ENCODE measurements at regions of chr3 and their contacts with region 1.

Region 1: DNA sequence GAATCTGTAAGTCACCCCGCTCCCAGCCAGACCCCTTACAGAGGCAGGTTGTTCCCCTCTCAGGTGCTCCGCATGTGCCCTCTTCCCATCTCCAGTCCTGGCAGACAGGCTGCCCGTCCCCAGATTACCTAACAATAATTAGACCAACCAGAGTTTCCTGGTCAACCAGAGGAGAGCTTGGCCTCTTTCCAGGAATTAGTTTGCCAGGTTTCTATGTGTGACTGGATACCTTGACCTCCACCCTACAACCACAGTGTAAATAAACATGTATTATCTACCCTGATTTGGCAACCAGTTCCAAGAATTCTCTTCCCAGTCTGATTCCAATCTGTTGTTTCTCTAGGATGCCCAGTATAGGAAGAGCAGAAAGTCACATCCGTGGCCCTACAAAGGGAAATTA is 178.0 kb upstream of the UMPS start:
- DNase-seq: peak in 2 of 7 donors; percentile 47 to 70
- H3K4me3 ChIP-seq: no peak overlapping the region
- H3K27ac ChIP-seq: no peak overlapping the region
- H3K4me1 ChIP-seq: peaks cover 5 to 11% of the 10 kb centered on the region in 2 donors
- H3K27me3 ChIP-seq: no peaks in the 10 kb centered on the region
- CTCF ChIP-seq: no peak
- POLR2A ChIP-seq: no peak

Region 2: DNA sequence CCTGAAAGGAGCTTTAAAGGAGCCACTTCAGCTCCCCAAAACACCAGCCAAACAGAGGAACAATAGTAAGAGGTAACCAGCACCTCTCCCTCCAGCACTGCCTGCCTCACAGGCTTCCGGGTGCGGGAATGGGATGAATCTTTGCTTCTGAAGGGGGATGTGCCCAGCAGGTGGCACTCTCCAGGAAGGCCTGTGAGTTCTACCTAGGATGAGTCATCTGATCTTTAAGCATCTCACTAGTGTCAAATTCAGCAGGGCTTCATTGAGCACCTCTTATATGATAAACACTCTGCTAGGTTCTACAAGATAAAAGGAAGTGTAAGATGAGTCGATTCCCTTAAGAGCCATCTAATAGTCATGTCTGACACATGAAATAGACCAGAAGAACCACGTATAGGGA is 59.4 kb before region 1 on chr3:
- intact Hi-C with region 1: loop called (anchors 2 to 10 kb)
- DNase-seq: peak; percentile 55 to 81 (median 68)
- H3K4me3 ChIP-seq: no peak overlapping the region
- H3K27ac ChIP-seq: no peak overlapping the region
- H3K4me1 ChIP-seq: peaks cover 0 to 8% of the 10 kb centered on the region in 2 donors
- H3K27me3 ChIP-seq: no peaks in the 10 kb centered on the region
- CTCF ChIP-seq: peak; percentile 34 to 64 (median 54)
- POLR2A ChIP-seq: no peak

Region 3: GRCh38 chr3:124620600-124621063 is 68.4 kb after region 1 on chr3:
- intact Hi-C with region 1: no loop called
- DNase-seq: peak; percentile 74 to 94 (median 91)
- H3K4me3 ChIP-seq: no peak overlapping the region
- H3K27ac ChIP-seq: peak overlapping the region; percentile 51 to 75 (median 69)
- H3K4me1 ChIP-seq: peaks cover 14 to 32% of the 10 kb centered on the region in 2 donors
- H3K27me3 ChIP-seq: no peaks in the 10 kb centered on the region
- CTCF ChIP-seq: peak in 3 of 6 experiments; percentile 23 to 42 (median 24)
- POLR2A ChIP-seq: no peak

Region 4: DNA sequence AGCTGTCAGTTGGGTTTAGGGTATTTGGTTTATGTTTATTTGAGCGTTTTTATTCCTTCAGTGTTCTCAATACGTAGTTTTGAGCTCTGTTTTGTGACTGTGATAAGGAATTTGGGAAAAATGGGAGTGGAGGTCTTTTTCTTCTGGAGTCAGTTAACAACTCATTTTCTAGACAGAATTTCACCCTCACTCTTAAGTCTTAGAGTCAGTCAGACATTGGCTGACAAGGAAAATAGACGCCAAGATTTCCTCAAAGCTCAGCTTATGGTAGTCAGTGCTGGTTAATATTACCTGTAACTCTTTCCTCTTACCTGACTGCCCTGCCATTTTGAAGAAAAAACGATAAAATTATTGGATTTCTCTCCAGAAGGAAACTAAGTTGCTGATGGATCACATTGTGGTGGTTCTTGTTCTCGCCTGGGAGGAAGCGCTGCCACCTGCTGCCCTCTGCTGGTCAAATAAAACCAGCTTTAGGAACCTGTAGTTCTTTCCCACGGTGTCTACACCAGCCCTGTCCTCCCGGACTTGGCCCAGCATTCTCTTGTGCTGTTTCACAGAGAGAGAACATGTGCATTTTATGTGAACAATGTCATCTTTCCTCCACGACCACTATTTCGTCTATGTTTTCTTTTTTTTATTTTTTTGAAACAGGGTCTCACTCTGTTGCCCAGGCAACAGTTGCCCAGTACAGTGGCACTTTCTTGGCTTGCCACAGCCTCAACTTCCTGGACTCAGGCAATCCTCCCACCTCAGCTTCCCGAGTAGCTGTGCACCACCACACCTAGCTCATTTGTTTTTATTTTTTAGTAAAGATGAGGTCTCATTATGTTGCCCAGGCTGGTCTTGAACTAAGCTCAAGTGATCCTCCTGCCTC is 136.6 kb after region 1 on chr3:
- intact Hi-C with region 1: no loop called
- DNase-seq: peak; percentile 80 to 94 (median 84)
- H3K4me3 ChIP-seq: no peak overlapping the region
- H3K27ac ChIP-seq: no peak overlapping the region
- H3K4me1 ChIP-seq: peaks cover 0 to 5% of the 10 kb centered on the region in 2 donors
- H3K27me3 ChIP-seq: no peaks in the 10 kb centered on the region
- CTCF ChIP-seq: peak; percentile 70 to 93 (median 85)
- POLR2A ChIP-seq: no peak

Measured in adrenal gland (tissue), 19 donors.